ENCODE measurements at regions of chr7 and their contacts with region 1.

Region 1: GRCh38 chr7:636396-636795 is 90.1 kb upstream of the DNAAF5 start:
- DNase-seq: no peak
- H3K4me3 ChIP-seq: no peak overlapping the region
- H3K27me3 ChIP-seq: no peaks in the 10 kb centered on the region
- CTCF ChIP-seq: peak; percentile 60

Region 2: DNA sequence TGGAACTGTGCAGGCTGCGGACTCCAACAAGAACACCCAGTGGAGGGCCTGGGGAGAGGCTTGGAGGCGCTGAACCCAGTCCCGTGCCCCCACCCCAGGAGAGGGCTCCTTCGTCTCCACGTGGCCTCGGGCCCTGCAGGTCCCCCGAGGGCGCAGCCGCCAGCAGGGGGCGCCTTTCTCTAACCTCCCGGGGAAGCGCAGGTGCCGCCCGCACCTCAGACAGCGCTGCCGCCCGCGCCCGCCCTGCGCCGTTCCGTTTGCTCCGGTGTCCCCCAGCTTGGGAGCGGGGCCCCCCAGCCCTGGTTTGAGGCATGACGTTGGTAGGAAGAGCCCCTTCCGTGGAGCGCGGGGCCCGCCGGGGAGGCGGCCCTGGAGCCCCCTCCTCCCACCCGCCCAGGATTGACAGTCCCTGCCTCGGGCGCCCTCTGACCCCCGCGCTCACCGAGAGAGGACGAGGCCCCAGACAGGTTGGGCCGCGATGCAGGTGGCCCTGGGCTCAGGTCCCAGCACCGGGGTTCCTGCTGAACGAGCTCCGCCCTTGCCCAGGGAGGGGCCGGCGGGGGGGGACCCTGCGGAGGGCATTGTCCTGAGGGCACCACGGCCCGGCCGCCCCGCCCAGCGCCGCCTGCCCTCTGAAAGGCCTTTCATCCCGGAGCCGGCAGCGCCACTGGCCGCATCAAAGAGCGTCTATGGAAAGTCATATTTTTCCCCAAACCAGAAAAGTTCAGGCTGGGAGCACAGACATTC is 303.6 kb before region 1 on chr7:
- CTCF ChIA-PET with region 1: interaction called, 17 read pairs
- POLR2A ChIA-PET with region 1: no interaction called
- DNase-seq: no peak
- H3K4me3 ChIP-seq: peak overlapping the region; percentile 23
- H3K27me3 ChIP-seq: 0 out of 2 replicates have a peak, but pooled peaks cover 2% of the 10 kb centered on the region
- CTCF ChIP-seq: peak; percentile 78

Region 3: GRCh38 chr7:437329-438251 is 198.8 kb before region 1 on chr7:
- CTCF ChIA-PET with region 1: no interaction called
- POLR2A ChIA-PET with region 1: no interaction called
- DNase-seq: no peak
- H3K4me3 ChIP-seq: no peak overlapping the region
- H3K27me3 ChIP-seq: no peaks in the 10 kb centered on the region
- CTCF ChIP-seq: no peak

Measured in BJ (cell line).